ENCODE measurements at regions of chr14 and their contacts with region 1.

Region 1: DNA sequence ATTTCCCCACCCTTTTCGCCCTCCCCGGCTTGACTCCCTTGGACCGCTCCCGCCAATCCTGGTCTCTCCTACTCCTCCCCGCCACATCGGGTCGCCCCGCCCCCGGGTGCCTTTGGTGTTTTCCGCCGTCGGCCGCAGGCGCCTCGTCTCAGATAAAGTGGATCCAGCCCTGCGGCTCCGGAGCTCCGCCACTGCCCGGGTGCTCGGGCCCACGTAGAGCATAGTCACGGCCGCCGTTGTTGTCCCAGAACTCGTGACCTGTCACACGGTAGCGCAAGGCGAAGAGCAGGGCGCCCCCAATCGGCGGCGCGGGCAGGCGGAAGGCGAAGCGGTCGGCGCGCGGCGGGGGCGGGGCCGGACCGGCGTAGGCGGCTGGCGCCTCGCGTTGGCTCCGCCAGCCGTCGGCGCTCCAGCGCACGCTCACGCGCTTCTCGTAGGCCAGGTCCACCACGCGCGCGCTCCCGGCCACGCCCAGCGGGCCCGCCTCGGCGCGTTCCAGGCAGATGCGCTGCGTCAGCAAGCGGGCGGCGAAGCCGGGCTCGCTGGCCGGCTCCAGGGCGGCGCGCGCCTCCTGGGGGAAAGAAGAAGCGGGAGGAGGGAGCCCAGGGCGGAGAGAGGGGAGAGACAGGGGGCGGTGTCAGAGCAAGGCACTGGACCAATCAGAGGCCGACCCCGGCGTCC is 1.2 kb downstream of the PPP1R3E start:
- DNase-seq: peak; percentile 96
- H3K4me3 Mint-ChIP-seq: peak overlapping the region; percentile 90
- H3K27ac Mint-ChIP-seq: peak overlapping the region; percentile 92
- H3K4me1 Mint-ChIP-seq: peaks cover 12% of the 10 kb centered on the region
- H3K27me3 Mint-ChIP-seq: peaks cover 13% of the 10 kb centered on the region

Region 2: GRCh38 chr14:22872033-22872832 is 429.2 kb before region 1 on chr14:
- CTCF ChIA-PET with region 1: no interaction called
- intact Hi-C with region 1: loop called (anchors 5 kb)
- DNase-seq: peak; percentile 87
- H3K4me3 Mint-ChIP-seq: peak overlapping the region; percentile 91
- H3K27ac Mint-ChIP-seq: peak overlapping the region; percentile 100
- H3K4me1 Mint-ChIP-seq: peaks cover 29% of the 10 kb centered on the region
- H3K27me3 Mint-ChIP-seq: no peaks in the 10 kb centered on the region

Region 3: DNA sequence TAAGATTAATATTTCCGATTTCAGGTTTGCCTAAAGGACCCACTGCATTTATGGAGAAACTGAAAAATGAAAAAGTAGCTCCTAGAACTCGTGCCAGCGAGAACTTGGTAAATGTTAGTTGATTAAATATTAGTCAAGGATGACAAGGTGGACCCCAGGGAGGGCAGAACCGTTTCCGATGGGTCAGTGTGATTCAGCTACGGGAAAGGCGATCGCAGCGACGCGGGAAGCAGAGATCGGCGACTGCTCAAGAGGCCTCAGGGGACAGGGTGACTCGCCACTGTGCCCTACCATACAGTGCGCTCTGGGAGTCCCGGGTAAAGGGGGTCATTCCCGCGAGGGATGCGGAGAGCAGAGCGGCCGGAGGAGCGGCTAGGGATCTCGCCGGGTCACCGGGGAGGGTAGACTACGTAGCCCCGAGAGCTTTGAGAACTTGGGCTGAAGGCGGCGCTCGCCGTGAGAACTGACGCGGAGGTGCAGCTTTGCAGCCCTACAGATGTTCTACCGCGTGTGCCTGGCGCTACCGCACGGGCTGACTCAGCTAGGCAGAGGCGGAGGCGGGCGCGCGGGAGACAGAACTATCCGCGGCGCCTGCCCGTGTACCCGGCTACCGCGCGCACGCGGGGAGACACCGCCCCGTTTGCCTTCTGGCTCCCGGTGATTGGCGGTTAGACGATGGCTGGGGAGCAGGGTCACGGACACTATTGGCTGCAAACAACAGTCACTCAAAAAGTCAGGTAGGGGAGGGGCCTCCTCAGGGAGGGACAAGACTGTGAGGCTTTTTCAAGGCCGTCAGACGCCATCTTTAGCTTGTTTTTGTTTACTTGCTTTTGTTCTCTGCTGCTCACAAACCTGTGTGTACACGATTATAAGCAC is 294.6 kb before region 1 on chr14:
- CTCF ChIA-PET with region 1: no interaction called
- intact Hi-C with region 1: loop called (anchors 2 kb)
- DNase-seq: peak; percentile 99
- H3K4me3 Mint-ChIP-seq: peak overlapping the region; percentile 96
- H3K27ac Mint-ChIP-seq: peak overlapping the region; percentile 98
- H3K4me1 Mint-ChIP-seq: peaks cover 36% of the 10 kb centered on the region
- H3K27me3 Mint-ChIP-seq: no peaks in the 10 kb centered on the region

Region 4: DNA sequence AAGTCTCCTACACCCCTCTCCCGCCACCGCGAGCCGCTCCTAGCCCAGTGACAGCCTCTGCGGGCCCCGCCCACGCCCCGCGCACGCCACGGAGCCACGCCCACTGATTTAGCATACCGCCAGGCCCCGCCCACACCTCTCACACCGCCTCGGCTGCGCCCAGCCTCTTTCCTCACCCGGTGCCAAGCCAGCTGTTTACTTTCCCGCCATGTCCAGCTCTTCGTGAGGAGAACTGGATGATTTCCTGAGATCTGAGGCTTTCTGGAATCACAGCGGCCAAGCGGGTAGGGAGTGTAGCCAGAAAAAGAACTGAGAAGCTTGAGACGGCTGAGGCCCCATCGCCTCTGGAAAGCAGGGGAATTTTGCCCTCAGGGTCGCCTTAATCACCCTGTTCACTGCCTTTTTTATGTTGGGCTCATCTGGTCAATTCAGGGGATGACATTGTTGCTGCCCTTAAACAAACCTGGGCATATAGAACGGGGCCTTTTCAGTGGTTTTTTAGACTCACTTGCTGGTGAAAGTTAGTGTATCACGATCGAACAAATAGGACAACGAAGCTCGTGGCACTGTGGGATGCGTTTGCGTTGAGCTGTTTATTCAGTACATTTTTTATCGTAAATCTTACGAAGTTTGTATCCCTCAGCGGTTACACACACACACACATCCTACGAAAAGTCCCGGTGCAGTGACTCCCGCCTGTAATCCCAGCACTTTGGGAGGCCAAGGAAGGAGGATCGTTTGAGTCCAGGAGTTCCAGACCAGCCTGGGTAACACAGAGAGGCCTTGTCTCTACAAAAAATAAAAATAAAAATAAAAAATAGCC is 63.4 kb before region 1 on chr14 and contains the start of gene RNF212B:
- CTCF ChIA-PET with region 1: no interaction called
- intact Hi-C with region 1: loop called (anchors 2 kb)
- DNase-seq: peak; percentile 92
- H3K4me3 Mint-ChIP-seq: peak within 1 kb of the TSS; percentile 65
- H3K27ac Mint-ChIP-seq: no peak within 1 kb of the TSS
- H3K4me1 Mint-ChIP-seq: peaks cover 5% of the 10 kb centered on the region
- H3K27me3 Mint-ChIP-seq: peaks cover 10% of the 10 kb centered on the region
- total RNA-seq, gene RNF212B: not detected

Region 5: GRCh38 chr14:23269193-23269592 is 32.2 kb before region 1 on chr14:
- CTCF ChIA-PET with region 1: interaction called, 9 read pairs
- intact Hi-C with region 1: loop called (anchors 1 kb)
- DNase-seq: no peak
- H3K4me3 Mint-ChIP-seq: no peak overlapping the region
- H3K27ac Mint-ChIP-seq: no peak overlapping the region
- H3K4me1 Mint-ChIP-seq: no peaks in the 10 kb centered on the region
- H3K27me3 Mint-ChIP-seq: no peaks in the 10 kb centered on the region

Region 6: GRCh38 chr14:23469127-23469905 is 167.9 kb after region 1 on chr14 and contains the start of gene NGDN:
- CTCF ChIA-PET with region 1: no interaction called
- intact Hi-C with region 1: loop called (anchors 1 kb)
- DNase-seq: peak; percentile 96
- H3K4me3 Mint-ChIP-seq: no peak within 1 kb of the TSS
- H3K27ac Mint-ChIP-seq: no peak within 1 kb of the TSS
- H3K4me1 Mint-ChIP-seq: peaks cover 11% of the 10 kb centered on the region
- H3K27me3 Mint-ChIP-seq: no peaks in the 10 kb centered on the region
- total RNA-seq, gene NGDN: 38.9 to 40.8 TPM